HCT116 (cell line): ENCODE measurements at regions of chr20 and their contacts with region 1.

Region 1: DNA sequence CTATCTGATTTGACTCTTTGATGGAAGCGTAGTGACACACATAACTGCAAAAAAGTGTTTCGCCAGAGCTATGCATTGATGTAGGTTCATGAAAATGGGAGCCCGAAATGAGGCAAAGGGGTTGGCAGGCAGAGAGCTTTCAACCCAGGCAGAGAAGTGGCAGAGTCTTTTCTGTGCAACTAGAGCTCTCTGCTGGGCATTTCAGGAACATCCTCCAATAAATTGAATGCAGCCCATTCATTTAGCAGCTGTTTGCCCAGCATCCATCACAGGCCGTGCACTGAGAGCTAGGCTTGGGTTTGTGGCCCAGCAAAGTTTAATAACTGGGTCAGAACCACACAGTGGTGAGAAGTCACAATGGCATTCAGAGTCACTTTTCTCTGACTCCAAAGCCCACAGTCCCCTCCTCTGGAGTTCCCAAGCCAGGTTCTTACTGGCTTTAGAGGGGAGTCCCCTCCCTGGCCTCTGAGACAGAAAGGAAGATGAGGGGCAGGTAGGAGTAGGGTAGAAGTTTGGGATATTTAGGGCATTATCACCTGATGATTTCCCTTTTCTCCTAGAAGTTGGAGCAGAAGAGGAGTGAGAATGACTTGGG is 31.8 kb upstream of the ELMO2 start:
- DNase-seq: peak; percentile 21
- ATAC-seq: peak; percentile 84
- H3K4me3 ChIP-seq: no peak overlapping the region
- H3K27ac ChIP-seq: no peak overlapping the region
- H3K4me1 ChIP-seq: peaks cover 0 to 4% of the 10 kb centered on the region in 2 experiments; a peak in 1 of 4 replicates
- H3K27me3 ChIP-seq: peaks cover 20% of the 10 kb centered on the region; the same call in 1 of the 2 replicates
- CTCF ChIP-seq: peak; percentile 32 to 45 (median 36); a peak in 5 of 6 replicates
- POLR2A ChIP-seq: no peak
- RAD21 ChIP-seq: peak; percentile 67

Region 2: GRCh38 chr20:44598423-44599305 is 1839.6 kb before region 1 on chr20:
- CTCF ChIA-PET with region 1: no interaction called
- POLR2A ChIA-PET with region 1: no interaction called
- RAD21 ChIA-PET with region 1: no interaction called
- intact Hi-C with region 1: no loop called
- DNase-seq: no peak
- ATAC-seq: no peak; the same call in 1 of the 2 replicates
- H3K4me3 ChIP-seq: no peak overlapping the region
- H3K27ac ChIP-seq: no peak overlapping the region
- H3K4me1 ChIP-seq: peaks cover 0 to 3% of the 10 kb centered on the region in 2 experiments; a peak in 1 of 4 replicates
- H3K27me3 ChIP-seq: no peaks in the 10 kb centered on the region
- CTCF ChIP-seq: 0 out of 6 replicates have a peak, but pooled peaks of 2 of the 3 experiments have one; percentile 17 to 21
- POLR2A ChIP-seq: no peak
- RAD21 ChIP-seq: no peak

Region 3: GRCh38 chr20:46307139-46307998 is 130.9 kb before region 1 on chr20:
- CTCF ChIA-PET with region 1: interaction called, 10 read pairs
- POLR2A ChIA-PET with region 1: no interaction called
- RAD21 ChIA-PET with region 1: interaction called, 3 read pairs
- intact Hi-C with region 1: no loop called
- DNase-seq: no peak
- ATAC-seq: peak; percentile 76
- H3K4me3 ChIP-seq: peak overlapping the region; percentile 38 to 57
- H3K27ac ChIP-seq: no peak overlapping the region; the same call in 1 of the 2 replicates
- H3K4me1 ChIP-seq: peaks cover 7 to 23% of the 10 kb centered on the region in 2 experiments; a peak in 3 of 4 replicates
- H3K27me3 ChIP-seq: peaks cover 9% of the 10 kb centered on the region; the same call in 1 of the 2 replicates
- CTCF ChIP-seq: peak; percentile 73 to 96 (median 90)
- POLR2A ChIP-seq: no peak
- RAD21 ChIP-seq: peak; percentile 69